B cell (primary cell): ENCODE measurements at regions of chr1 and their contacts with region 1.

Region 1: GRCh38 chr1:2189459-2190425 is 4.8 kb downstream of the FAAP20 start:
- DNase-seq: peak; percentile 90
- ATAC-seq: peak; percentile 90
- H3K4me3 ChIP-seq: peak overlapping the region in 4 of 5 experiments; percentile 33 to 57 (median 54)
- H3K4me3 Mint-ChIP-seq: peak overlapping the region; percentile 75
- H3K27ac ChIP-seq: peak overlapping the region in 1 of 2 donors; percentile 73
- H3K27ac Mint-ChIP-seq: peak overlapping the region; percentile 93
- H3K4me1 ChIP-seq: peaks cover 4 to 25% of the 10 kb centered on the region in 2 donors
- H3K4me1 Mint-ChIP-seq: peaks cover 15% of the 10 kb centered on the region
- H3K27me3 ChIP-seq: no peaks in the 10 kb centered on the region
- H3K27me3 Mint-ChIP-seq: no peaks in the 10 kb centered on the region
- CTCF ChIP-seq: no peak

Region 2: DNA sequence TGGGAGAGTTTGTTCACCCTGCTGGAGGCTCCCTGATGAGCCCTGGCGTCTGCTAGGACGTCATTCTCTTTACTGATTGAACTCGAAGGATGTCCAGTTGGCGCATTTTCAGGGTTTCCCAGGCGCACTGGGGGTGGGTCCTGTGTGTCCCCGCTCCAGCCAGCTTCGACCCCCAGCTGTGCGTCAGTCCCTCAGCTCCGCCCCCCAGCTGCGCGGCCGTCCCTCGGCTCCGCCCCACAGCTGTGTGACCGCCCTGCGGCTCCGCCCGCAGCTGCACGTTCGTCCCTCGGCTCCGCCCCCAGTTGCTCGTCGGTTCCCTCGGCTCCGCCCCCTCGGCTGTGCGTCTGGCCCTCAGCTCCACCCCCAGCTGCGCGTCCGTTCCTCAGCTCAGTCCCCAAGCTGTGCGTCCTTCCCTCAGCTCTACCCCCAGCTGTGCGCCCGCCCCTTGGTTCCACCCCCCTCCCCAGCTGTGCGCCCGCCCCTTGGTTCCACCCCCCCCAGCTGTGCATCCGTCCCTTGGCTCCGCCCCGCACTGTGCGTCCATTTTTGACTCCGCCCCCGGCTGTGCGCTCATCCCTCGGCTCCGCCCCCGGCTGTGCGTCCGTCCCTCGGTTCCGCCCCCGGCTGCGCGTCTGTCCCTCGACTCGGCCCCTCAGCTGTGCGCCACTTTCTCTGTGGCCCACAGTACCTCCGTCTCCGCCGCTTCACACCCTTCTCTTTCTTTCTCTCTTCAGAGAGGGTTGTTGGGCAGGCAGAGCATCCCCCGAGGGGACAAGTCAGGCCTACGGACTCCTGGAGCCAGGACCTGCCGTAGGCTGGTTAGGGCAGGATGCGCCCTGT is 56.5 kb before region 1 on chr1:
- CTCF ChIA-PET with region 1: interaction called, 5 read pairs
- POLR2A ChIA-PET with region 1: no interaction called
- intact Hi-C with region 1: loop called (anchors 1 kb)
- DNase-seq: peak; percentile 98
- ATAC-seq: peak; percentile 91
- H3K4me3 ChIP-seq: peak overlapping the region; percentile 16 to 64 (median 56)
- H3K4me3 Mint-ChIP-seq: peak overlapping the region; percentile 88
- H3K27ac ChIP-seq: peak overlapping the region; percentile 80 to 82
- H3K27ac Mint-ChIP-seq: peak overlapping the region; percentile 91
- H3K4me1 ChIP-seq: peaks cover 10 to 19% of the 10 kb centered on the region in 2 donors
- H3K4me1 Mint-ChIP-seq: peaks cover 23% of the 10 kb centered on the region
- H3K27me3 ChIP-seq: no peaks in the 10 kb centered on the region
- H3K27me3 Mint-ChIP-seq: no peaks in the 10 kb centered on the region
- CTCF ChIP-seq: no peak

Region 3: DNA sequence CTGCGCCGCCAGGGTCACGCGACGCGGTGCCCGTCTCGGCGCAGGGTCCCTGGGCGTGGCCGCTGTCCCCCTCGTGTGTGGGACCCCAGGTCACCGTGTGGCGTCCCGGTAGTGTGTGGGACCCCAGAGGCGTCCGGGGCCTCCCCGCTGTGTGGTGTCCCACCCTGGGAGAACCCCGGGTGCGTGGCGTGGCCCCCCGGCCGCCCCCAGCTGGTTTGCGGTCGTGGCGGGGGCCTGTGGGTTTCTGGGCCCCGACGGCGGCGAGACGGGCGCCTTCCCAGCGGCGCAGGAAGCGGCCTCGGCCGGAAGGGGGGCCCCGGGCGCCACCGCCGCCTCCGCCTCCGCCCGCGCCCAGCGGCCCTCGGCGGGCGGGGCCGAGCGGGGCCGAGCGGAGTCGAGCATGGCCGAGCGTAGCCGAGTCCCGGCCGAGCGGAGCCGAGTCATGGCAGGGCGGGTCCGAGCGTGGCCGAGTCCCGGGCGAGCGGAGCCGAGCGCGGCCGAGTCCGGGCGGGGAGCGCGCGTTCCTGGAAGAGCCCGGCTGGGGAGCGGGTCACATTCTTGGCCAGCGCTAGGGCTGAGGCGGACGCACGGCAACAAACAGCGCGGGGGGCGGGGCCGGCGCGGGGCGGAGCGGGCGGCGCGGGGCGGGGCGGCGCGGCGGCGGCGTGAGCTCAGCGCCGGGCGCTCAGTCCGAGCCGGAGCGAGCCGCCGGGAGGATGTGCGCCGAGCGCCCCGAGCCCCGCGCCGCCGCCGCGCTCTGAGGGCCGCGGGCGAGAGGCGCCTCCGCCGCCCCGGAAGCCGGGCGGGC is 37.8 kb after region 1 on chr1:
- CTCF ChIA-PET with region 1: interaction called, 17 read pairs
- POLR2A ChIA-PET with region 1: interaction called, 6 read pairs
- intact Hi-C with region 1: loop called (anchors 1 kb)
- DNase-seq: peak; percentile 98
- ATAC-seq: peak; percentile 91
- H3K4me3 ChIP-seq: peak overlapping the region in 4 of 5 experiments; percentile 50 to 65 (median 60)
- H3K4me3 Mint-ChIP-seq: peak overlapping the region; percentile 80
- H3K27ac ChIP-seq: peak overlapping the region; percentile 57 to 83
- H3K27ac Mint-ChIP-seq: peak overlapping the region; percentile 83
- H3K4me1 ChIP-seq: peaks cover 35 to 43% of the 10 kb centered on the region in 2 donors
- H3K4me1 Mint-ChIP-seq: peaks cover 37% of the 10 kb centered on the region
- H3K27me3 ChIP-seq: no peaks in the 10 kb centered on the region
- H3K27me3 Mint-ChIP-seq: no peaks in the 10 kb centered on the region
- CTCF ChIP-seq: no peak

Region 4: DNA sequence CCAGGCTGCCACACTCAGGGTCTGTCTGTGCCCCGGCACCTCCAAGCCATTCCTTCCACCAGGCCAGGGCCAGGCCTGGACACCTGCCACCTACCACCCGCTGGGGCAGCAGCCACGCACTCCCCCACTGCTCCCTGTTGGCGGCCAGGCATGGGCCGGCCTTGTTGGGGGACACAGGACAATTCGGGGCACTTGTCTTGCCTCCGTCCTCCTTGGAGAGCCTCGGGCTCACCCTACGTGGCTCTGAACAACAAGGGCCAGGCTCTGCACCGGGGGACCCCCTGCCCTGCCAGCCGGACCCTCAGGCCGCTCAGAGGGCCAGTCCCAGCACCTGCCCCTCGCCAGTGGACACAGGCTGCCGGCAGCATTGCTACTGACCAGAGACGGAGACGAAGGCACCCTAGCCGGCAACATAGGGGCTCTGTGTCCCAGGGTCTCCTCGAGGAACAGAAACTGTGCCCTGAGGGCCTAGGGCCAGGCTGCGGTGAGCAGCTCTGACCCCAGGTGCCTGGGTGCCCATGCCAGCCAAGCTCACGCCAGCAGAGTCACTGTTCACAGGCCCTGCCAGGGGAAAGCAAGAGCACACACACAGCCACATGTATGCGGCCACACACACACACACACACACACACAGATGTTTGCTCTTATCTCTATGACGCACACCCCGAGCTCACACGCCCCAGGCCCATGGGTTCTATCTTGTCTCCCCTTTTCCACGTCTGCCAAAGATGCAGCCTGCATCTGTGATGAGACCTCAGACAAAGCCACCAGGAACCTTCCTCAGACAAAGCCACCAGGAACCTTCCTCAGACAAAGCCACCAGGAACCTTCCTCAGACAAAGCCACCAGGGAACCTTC is 155.7 kb after region 1 on chr1:
- CTCF ChIA-PET with region 1: no interaction called
- POLR2A ChIA-PET with region 1: no interaction called
- intact Hi-C with region 1: no loop called
- DNase-seq: no peak
- ATAC-seq: no peak
- H3K4me3 ChIP-seq: no peak overlapping the region
- H3K4me3 Mint-ChIP-seq: no peak overlapping the region
- H3K27ac ChIP-seq: no peak overlapping the region
- H3K27ac Mint-ChIP-seq: no peak overlapping the region
- H3K4me1 ChIP-seq: no peaks in the 10 kb centered on the region
- H3K4me1 Mint-ChIP-seq: no peaks in the 10 kb centered on the region
- H3K27me3 ChIP-seq: no peaks in the 10 kb centered on the region
- H3K27me3 Mint-ChIP-seq: no peaks in the 10 kb centered on the region
- CTCF ChIP-seq: no peak

Region 5: DNA sequence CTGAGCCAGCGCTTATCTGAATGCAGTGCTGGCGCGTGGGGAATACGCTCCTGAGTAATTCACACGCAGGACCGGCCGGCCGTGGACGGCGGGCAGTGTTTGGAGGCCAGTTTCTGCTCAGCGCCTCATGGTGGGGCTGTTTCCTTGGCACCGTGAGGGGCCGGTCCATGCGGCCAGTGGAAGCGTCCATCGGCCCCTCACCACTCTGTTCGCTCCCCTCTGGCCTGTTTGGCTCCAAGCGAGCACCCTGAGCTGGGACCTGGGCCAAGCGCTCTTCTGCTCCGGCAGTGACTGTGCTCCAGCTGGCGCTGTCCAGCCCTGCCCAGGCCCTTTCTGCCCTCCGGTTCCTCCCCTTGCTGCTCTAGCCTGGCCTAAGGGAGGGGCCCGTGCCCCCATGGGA is 270.0 kb after region 1 on chr1:
- CTCF ChIA-PET with region 1: no interaction called
- POLR2A ChIA-PET with region 1: no interaction called
- intact Hi-C with region 1: no loop called
- DNase-seq: no peak
- ATAC-seq: no peak
- H3K4me3 ChIP-seq: no peak overlapping the region
- H3K4me3 Mint-ChIP-seq: no peak overlapping the region
- H3K27ac ChIP-seq: no peak overlapping the region
- H3K27ac Mint-ChIP-seq: no peak overlapping the region
- H3K4me1 ChIP-seq: no peaks in the 10 kb centered on the region
- H3K4me1 Mint-ChIP-seq: no peaks in the 10 kb centered on the region
- H3K27me3 ChIP-seq: peaks cover 0 to 7% (median 0%) of the 10 kb centered on the region in 4 experiments
- H3K27me3 Mint-ChIP-seq: peaks cover 4% of the 10 kb centered on the region
- CTCF ChIP-seq: no peak